Activated naive CD4-positive, alpha-beta T cell treated with anti-CD3 and anti-CD28 coated beads for 36 hours (primary cell): ENCODE measurements at regions of chr12 and their contacts with region 1.

Region 1: GRCh38 chr12:122871851-122872780 is 23.8 kb downstream of the VPS37B start:
- DNase-seq: peak; percentile 85
- H3K4me3 Mint-ChIP-seq: peak overlapping the region; percentile 62
- H3K27ac Mint-ChIP-seq: peak overlapping the region; percentile 67
- H3K4me1 Mint-ChIP-seq: peaks cover 59% of the 10 kb centered on the region
- H3K27me3 Mint-ChIP-seq: peaks cover 23% of the 10 kb centered on the region

Region 2: DNA sequence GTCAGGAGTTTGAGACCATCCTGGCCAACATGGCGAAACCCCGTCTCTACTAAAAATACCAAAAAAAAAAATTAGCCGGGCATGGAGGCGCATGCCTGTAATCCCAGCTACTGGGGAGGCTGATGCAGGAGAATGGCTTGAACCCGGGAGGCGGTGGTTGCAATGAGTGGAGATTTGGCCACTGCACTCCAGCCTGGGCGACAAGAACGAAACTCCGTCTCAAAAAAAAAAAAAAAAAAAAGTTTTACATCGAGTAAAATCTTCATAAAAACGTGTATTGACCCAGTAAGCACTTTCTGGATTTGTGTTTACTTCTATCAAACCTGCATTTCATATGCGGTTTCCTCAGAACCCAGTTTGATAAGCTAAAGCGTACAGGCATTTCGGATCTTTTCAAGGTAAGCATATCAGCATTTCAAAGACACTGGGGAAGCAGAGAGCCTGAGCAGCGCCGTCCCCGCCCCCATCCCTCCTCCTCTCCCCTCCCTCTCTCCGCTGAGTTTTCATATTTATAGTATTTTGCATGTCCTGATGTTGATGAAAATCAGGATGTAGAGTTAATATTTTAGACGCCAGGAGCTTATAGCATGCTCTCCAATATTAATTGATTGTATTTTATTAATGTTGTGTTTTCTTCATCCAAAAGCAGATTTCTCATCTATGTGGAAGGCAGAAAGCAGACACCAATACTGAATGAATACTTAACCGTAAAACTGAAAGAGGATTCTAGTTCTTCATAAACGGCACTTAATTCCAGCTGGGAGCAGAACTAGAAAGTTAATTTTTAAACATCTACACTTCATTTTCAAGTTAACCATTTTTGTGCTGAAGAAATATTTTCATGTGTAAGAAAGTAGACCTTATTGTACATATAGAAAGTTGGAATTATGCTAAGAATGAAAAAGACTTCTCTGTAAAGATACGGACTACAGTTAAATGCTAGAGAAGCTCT is 46.1 kb before region 1 on chr12:
- CTCF ChIA-PET with region 1: no interaction called
- intact Hi-C with region 1: no loop called
- DNase-seq: no peak
- H3K4me3 Mint-ChIP-seq: peak overlapping the region; percentile 34
- H3K27ac Mint-ChIP-seq: no peak overlapping the region
- H3K4me1 Mint-ChIP-seq: peaks cover 2% of the 10 kb centered on the region
- H3K27me3 Mint-ChIP-seq: no peaks in the 10 kb centered on the region

Region 3: GRCh38 chr12:122860346-122861090 is 11.6 kb before region 1 on chr12:
- CTCF ChIA-PET with region 1: interaction called, 23 read pairs
- intact Hi-C with region 1: no loop called
- DNase-seq: peak; percentile 91
- H3K4me3 Mint-ChIP-seq: no peak overlapping the region
- H3K27ac Mint-ChIP-seq: no peak overlapping the region
- H3K4me1 Mint-ChIP-seq: no peaks in the 10 kb centered on the region
- H3K27me3 Mint-ChIP-seq: no peaks in the 10 kb centered on the region

Region 4: DNA sequence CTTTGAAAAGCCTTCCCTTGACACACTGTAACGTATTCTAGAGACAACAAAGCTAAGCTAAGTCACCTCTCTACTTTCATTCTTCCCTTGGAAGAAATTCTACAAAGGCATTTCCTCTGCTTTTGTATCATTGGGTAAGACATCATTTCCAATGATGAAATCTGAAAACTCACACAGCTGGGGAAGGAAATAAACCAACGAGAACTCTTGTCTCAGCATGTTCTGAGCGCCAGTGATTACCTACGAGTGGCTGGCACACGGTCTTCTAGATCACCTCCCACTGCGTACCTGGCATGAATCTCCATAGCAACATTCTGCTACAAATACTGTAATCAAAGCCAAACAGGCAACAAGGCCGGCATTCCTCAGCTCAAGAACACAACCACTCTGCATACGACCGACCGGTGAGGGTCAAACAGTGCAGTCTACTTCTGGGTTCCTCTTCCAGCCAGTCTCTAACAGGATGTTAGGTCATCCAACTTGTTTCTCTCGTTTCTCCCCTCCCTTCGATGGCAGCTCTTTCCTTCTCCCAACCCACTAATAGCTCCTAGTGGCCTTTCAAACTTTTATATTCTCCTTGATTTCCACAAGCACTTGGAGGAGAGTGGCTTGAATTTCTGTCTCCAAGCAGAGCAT is 16.2 kb after region 1 on chr12:
- CTCF ChIA-PET with region 1: interaction called, 7 read pairs
- intact Hi-C with region 1: loop called (anchors 1 kb)
- DNase-seq: peak; percentile 72
- H3K4me3 Mint-ChIP-seq: peak overlapping the region; percentile 77
- H3K27ac Mint-ChIP-seq: peak overlapping the region; percentile 91
- H3K4me1 Mint-ChIP-seq: peaks cover 79% of the 10 kb centered on the region
- H3K27me3 Mint-ChIP-seq: peaks cover 3% of the 10 kb centered on the region

Region 5: GRCh38 chr12:122909442-122910288 is 37.5 kb after region 1 on chr12:
- CTCF ChIA-PET with region 1: no interaction called
- intact Hi-C with region 1: no loop called
- DNase-seq: no peak
- H3K4me3 Mint-ChIP-seq: no peak overlapping the region
- H3K27ac Mint-ChIP-seq: no peak overlapping the region
- H3K4me1 Mint-ChIP-seq: no peaks in the 10 kb centered on the region
- H3K27me3 Mint-ChIP-seq: no peaks in the 10 kb centered on the region

Region 6: DNA sequence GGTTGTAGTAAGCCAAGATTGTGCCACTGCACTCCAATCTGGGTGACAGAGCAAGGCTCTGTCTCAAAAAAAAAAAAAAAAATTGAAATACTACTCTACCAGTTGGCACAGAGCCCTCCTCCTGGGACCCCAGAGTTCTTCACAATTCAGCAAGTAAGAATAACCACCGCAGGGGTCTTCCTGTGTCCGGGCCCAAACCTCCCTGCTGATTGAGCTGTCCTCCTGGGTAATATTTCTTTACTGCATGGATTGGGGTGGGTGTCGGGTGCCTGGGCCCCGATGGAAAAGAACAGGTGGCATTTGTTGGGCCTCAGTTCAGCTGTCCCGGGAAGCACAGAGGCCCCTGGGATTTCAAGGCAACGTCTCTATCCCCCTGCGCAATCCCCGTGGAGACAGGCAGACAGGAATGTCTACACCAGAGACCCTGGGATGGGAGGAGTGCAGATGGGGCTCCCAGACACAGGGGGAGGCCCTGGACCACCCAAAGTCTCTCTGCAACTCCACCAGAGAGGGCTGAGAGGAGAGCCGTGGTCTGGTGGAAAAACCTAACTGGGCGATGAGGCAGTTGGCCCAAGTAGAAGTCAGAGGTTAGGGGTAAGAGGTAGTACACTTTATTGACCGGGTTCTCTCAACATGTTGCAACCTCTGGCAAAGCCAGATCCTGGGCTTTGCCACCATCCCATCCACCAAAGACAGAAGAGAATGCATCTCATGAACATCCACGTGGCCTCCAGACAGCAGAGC is 56.5 kb after region 1 on chr12:
- CTCF ChIA-PET with region 1: no interaction called
- intact Hi-C with region 1: no loop called
- DNase-seq: no peak
- H3K4me3 Mint-ChIP-seq: no peak overlapping the region
- H3K27ac Mint-ChIP-seq: no peak overlapping the region
- H3K4me1 Mint-ChIP-seq: peaks cover 2% of the 10 kb centered on the region
- H3K27me3 Mint-ChIP-seq: no peaks in the 10 kb centered on the region

Region 7: DNA sequence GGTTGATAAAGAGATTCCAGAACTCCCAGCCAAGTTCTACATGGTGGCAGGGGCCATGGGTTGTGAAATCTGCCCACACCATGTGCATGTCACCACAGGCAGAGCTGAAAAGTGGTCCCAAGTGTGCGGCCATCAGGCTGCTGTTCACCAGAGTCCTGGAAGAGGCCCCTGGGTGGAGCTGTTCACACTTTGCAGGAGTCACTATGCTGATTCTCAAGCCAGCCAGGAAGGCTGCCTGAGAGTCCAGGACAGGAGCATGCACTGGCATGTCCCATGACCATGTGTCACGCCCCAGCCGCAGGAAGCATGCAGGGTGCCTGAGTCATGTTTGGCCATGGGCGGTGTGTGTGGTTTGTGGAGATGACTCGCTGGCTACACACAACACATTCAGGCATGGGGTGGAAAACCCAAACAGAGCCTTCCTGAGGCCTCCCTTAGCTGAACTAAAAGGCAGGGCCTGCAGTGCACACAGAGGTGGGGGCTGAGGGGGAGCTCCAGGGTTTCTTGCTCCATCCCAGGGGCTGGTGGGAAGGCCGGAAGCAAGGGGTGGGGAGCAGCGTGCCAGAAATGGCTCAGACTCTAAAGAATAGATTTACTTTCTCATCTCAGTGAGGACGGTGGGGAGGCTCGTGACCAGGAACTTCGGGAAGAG is 74.7 kb after region 1 on chr12:
- CTCF ChIA-PET with region 1: interaction called, 5 read pairs
- intact Hi-C with region 1: loop called (anchors 1 kb)
- DNase-seq: peak; percentile 96
- H3K4me3 Mint-ChIP-seq: no peak overlapping the region
- H3K27ac Mint-ChIP-seq: peak overlapping the region; percentile 83
- H3K4me1 Mint-ChIP-seq: peaks cover 17% of the 10 kb centered on the region
- H3K27me3 Mint-ChIP-seq: no peaks in the 10 kb centered on the region